ENCODE measurements at regions of chr19 and their contacts with region 1.

Region 1: DNA sequence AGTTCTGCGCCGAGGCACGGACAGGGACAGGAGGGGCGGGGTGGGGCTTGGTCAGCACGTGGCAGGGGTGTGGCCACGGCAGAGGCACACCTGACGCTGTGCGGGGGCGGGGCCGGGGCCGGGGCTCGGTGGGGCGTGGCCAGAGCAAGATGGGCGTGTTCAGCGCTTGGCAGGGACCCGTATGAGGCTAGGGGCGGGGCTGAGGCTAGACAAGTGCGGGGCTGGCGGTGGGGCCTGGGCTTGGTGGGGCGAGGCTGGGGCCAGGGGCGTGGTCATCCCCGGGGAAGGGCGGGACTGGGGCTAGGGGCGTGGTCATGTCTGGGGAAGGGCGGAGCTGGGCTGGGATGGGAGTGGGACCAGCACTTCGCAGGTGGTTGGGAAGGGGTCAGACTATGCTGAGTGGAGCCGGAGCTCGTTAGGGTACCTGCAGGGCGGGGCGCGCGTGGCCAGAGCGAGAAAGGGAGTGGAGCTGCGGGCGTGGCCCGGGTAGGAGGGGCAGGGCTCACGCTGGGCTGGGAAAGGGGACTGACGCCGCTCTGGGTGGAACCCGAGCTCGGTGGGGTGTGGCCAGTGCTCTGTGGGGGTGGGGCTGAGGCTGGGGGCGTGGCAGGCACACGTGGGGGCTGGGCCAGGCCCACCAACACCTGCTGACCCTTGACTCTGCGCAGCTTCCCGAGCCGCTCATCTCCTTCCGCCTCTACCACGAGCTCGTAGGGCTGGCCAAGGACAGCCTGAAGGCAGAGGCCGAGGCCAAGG is 12.8 kb downstream of the POLR2E start:
- DNase-seq: peak; percentile 89
- ATAC-seq: peak; percentile 60
- H3K4me3 Mint-ChIP-seq: peak overlapping the region; percentile 45
- H3K27ac Mint-ChIP-seq: peak overlapping the region; percentile 72
- H3K4me1 Mint-ChIP-seq: peaks cover 21% of the 10 kb centered on the region
- H3K27me3 Mint-ChIP-seq: no peaks in the 10 kb centered on the region

Region 2: GRCh38 chr19:1020868-1021425 is 61.4 kb before region 1 on chr19 and contains the start of gene TMEM259:
- POLR2A ChIA-PET with region 1: interaction called, 130 read pairs
- DNase-seq: peak; percentile 97
- ATAC-seq: peak; percentile 86
- H3K4me3 Mint-ChIP-seq: peak within 1 kb of the TSS; percentile 90
- H3K27ac Mint-ChIP-seq: peak within 1 kb of the TSS; percentile 99
- H3K4me1 Mint-ChIP-seq: peaks cover 20% of the 10 kb centered on the region
- H3K27me3 Mint-ChIP-seq: no peaks in the 10 kb centered on the region
- total RNA-seq, gene TMEM259: 231 to 235 TPM

Region 3: DNA sequence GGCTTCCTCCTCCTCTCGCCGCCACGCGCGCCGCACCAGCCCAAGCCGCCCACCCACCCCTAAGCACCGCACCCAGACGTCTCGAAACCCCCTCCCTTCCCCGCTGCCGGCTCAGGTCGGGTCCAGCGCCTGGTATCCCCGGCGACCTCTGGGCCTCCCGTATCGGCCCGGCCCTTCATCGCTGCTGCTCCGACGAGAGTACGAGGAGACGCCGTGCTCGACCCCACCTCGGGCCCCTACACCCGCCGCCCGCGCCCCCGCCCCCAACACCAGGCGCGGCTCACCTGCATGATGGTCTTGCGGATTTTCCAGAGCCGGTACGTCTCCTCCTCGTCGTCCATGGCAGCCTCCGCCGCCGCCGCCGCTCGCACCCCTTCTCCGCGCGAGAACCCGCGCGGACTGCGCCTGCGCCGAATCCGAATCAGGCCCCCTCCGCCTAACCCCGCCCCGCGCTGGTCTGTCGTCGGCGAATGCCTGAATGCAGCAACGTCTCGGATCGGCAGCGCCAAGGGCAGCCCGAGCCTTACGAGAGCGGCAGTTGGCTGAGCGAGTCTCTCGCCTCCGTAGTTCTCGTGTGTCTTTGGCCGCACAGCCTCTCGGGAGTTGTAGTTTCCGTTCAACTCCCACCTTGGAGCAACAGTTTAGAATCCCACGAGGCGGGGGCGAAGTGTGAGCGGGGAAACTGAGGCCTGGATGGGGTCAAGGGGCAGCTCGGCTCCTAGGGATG is 12.8 kb after region 1 on chr19 and contains the start of gene POLR2E:
- POLR2A ChIA-PET with region 1: interaction called, 644 read pairs
- DNase-seq: peak; percentile 99
- ATAC-seq: peak; percentile 89
- H3K4me3 Mint-ChIP-seq: peak within 1 kb of the TSS; percentile 86
- H3K27ac Mint-ChIP-seq: peak within 1 kb of the TSS; percentile 95
- H3K4me1 Mint-ChIP-seq: peaks cover 35% of the 10 kb centered on the region
- H3K27me3 Mint-ChIP-seq: no peaks in the 10 kb centered on the region
- total RNA-seq, gene POLR2E: 142 to 163 TPM

Region 4: DNA sequence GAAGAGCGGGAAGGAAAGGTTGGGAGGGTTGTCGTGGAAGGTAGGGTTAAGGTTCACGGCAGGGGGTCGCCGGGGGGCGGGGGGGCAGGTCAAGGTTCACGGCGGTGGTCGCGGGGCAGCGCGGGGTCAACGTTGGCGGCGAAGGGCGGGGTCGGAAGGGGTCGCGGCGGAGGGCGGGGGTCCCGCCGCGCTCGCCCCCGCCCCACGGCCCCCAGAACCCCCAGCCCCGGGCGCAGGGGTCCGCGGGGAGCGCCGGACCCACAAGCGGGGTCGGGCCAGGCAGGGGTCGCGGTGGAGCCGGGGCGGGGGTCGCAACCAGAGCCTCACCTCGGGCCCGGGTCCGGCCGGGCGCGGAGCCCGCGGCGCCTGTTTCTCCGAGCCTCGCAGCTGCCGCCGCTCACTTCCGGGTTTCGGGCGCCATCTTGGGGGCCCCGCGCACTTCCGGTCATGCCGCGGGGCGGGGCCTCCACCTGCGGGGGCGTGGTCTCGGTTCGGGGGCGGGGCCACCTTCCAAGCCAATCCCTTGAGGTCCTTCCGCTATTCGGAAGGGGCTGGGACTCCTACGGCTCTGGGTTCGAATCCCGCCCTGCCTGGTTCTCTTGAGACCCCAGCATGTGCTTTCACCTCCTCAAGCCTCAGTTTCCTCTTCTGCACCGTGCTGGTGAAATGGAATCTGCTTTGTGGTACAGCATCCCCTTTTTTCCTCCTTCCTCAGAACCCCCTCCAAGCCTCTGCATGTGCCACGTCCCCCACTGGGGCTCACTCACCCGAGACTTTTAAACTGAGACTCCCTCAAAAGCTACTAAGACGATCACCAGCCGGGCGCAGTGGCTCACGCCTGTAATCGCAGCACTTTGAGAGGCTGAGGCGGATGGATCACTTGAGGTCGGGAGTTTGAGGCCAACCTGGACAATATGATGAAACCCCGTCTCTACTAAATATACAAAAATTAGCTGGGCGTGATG is 91.8 kb after region 1 on chr19 and contains the start of gene SBNO2:
- POLR2A ChIA-PET with region 1: no interaction called
- DNase-seq: peak; percentile 99
- ATAC-seq: peak; percentile 80
- H3K4me3 Mint-ChIP-seq: peak within 1 kb of the TSS; percentile 92
- H3K27ac Mint-ChIP-seq: peak within 1 kb of the TSS; percentile 97
- H3K4me1 Mint-ChIP-seq: peaks cover 19% of the 10 kb centered on the region
- H3K27me3 Mint-ChIP-seq: no peaks in the 10 kb centered on the region
- total RNA-seq, gene SBNO2: 77.7 to 90.6 TPM

Measured in activated naive CD8-positive, alpha-beta T cell treated with anti-CD3 and anti-CD28 coated beads, Interleukin-2, amount 10 ng/mL, durations not matched to agents 7 days and 5 days (primary cell).